ENCODE measurements at regions of chr12 and their contacts with region 1.

Region 1: GRCh38 chr12:39095636-39096330 is 190.4 kb upstream of the CPNE8 start:
- DNase-seq: no peak
- ATAC-seq: no peak
- H3K4me3 ChIP-seq: no peak overlapping the region
- H3K27ac ChIP-seq: no peak overlapping the region
- H3K4me1 ChIP-seq: no peaks in the 10 kb centered on the region
- H3K27me3 ChIP-seq: peaks cover 0 to 5% of the 10 kb centered on the region in 2 donors
- CTCF ChIP-seq: no peak
- POLR2A ChIP-seq: no peak

Region 2: DNA sequence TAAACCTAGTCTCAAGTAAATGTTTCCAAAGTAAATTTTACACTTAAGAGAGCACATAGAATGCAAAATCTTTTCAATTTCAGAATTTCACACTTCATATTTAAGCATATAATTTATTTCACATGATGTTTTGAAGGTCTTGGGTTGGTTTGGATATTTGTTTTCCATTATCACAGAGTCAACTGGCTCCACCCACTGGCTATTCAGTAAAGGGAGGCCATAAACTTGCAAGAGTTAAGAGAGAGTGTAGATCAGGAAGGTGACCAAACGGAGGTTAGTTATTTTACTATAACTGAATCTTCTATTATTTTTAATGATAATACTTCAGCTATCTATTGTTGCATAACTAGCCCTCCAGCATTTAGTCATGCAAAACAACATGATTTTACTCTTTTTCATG is 184.2 kb before region 1 on chr12:
- intact Hi-C with region 1: loop called in 1 of 2 experiments (anchors 10 kb)
- DNase-seq: no peak
- ATAC-seq: peak; percentile 37 to 48 (median 43)
- H3K4me3 ChIP-seq: no peak overlapping the region
- H3K27ac ChIP-seq: no peak overlapping the region
- H3K4me1 ChIP-seq: no peaks in the 10 kb centered on the region
- H3K27me3 ChIP-seq: no peaks in the 10 kb centered on the region
- CTCF ChIP-seq: peak in 3 of 4 donors; percentile 33 to 45 (median 34)
- POLR2A ChIP-seq: no peak